PC-3 (cell line): ENCODE measurements at regions of chr15 and their contacts with region 1.

Region 1: GRCh38 chr15:70156671-70157271 is 59.1 kb upstream of the TLE3 start:
- DNase-seq: peak; percentile 6
- ATAC-seq: no peak
- H3K4me3 ChIP-seq: no peak overlapping the region
- H3K27ac ChIP-seq: no peak overlapping the region
- H3K4me1 ChIP-seq: no peaks in the 10 kb centered on the region
- H3K27me3 ChIP-seq: peaks cover 7% of the 10 kb centered on the region; the same call in 1 of the 2 replicates
- CTCF ChIP-seq: no peak

Region 2: DNA sequence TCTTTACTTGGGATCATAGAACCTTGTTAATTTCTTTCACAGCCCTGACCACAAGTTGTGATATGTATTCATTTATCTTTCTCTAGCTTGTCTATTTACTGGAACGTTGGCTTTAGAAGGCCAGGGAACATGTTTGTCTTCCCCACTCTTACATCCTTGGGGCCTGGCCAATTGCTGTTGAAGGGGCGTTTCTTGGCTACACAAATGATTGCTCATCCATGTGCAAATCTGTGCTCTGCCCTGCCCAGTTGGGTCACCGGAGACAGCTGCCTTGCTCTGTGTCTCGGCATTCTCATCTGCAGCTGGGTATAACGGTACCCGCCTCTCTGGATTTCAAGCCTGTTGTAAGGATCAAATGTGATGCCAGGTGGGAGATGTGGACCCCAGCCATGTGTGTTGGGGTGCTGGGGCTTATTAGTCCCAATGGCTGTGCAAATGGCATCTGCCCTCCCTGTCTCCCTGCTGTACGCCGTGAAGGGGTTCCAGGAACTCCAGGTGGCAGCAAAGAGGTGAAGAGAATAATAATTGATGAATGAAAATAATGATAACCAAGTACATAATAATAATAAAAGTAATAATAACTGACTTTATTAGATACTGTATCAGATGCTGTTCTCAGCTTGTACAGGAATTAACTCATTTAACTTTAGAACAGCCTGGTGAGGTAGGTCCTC is 35.0 kb before region 1 on chr15:
- CTCF ChIA-PET with region 1: no interaction called
- POLR2A ChIA-PET with region 1: no interaction called
- intact Hi-C with region 1: no loop called
- DNase-seq: peak; percentile 71
- ATAC-seq: peak; percentile 81
- H3K4me3 ChIP-seq: no peak overlapping the region
- H3K27ac ChIP-seq: no peak overlapping the region
- H3K4me1 ChIP-seq: peaks cover 7% of the 10 kb centered on the region; the same call in 1 of the 2 replicates
- H3K27me3 ChIP-seq: no peaks in the 10 kb centered on the region
- CTCF ChIP-seq: peak; percentile 42

Region 3: GRCh38 chr15:70140543-70141375 is 16.0 kb before region 1 on chr15:
- CTCF ChIA-PET with region 1: no interaction called
- POLR2A ChIA-PET with region 1: no interaction called
- intact Hi-C with region 1: no loop called
- DNase-seq: no peak
- ATAC-seq: no peak
- H3K4me3 ChIP-seq: no peak overlapping the region
- H3K27ac ChIP-seq: no peak overlapping the region
- H3K4me1 ChIP-seq: no peaks in the 10 kb centered on the region; the same call in 1 of the 2 replicates
- H3K27me3 ChIP-seq: no peaks in the 10 kb centered on the region
- CTCF ChIP-seq: no peak

Region 4: GRCh38 chr15:70275461-70276138 is 118.8 kb after region 1 on chr15:
- CTCF ChIA-PET with region 1: interaction called, 20 read pairs
- POLR2A ChIA-PET with region 1: no interaction called
- intact Hi-C with region 1: no loop called
- DNase-seq: no peak
- ATAC-seq: no peak
- H3K4me3 ChIP-seq: no peak overlapping the region
- H3K27ac ChIP-seq: no peak overlapping the region
- H3K4me1 ChIP-seq: peaks cover 15% of the 10 kb centered on the region
- H3K27me3 ChIP-seq: no peaks in the 10 kb centered on the region
- CTCF ChIP-seq: no peak